Astrocyte of the cerebellum (primary cell): ENCODE measurements at regions of chr1 and their contacts with region 1.

Region 1: GRCh38 chr1:205569411-205570172 is 62.2 kb downstream of the ELK4 start:
- DNase-seq: no peak
- H3K4me3 ChIP-seq: no peak overlapping the region
- CTCF ChIP-seq: no peak

Region 2: GRCh38 chr1:205523891-205524793 is 45.5 kb before region 1 on chr1:
- in situ Hi-C with region 1: loop called (anchors 5 kb)
- DNase-seq: peak; percentile 43
- H3K4me3 ChIP-seq: no peak overlapping the region
- CTCF ChIP-seq: peak; percentile 84